AG04449 (cell line): ENCODE measurements at regions of chr20 and their contacts with region 1.

Region 1: GRCh38 chr20:49982346-49983122 is at the start of gene SNAI1:
- DNase-seq: no peak
- H3K4me3 ChIP-seq: peak within 1 kb of the TSS; percentile 86
- CTCF ChIP-seq: peak; percentile 50

Region 2: GRCh38 chr20:49865559-49865958 is 117.0 kb before region 1 on chr20:
- CTCF ChIA-PET with region 1: no interaction called
- POLR2A ChIA-PET with region 1: no interaction called
- DNase-seq: no peak
- H3K4me3 ChIP-seq: no peak overlapping the region
- CTCF ChIP-seq: no peak

Region 3: DNA sequence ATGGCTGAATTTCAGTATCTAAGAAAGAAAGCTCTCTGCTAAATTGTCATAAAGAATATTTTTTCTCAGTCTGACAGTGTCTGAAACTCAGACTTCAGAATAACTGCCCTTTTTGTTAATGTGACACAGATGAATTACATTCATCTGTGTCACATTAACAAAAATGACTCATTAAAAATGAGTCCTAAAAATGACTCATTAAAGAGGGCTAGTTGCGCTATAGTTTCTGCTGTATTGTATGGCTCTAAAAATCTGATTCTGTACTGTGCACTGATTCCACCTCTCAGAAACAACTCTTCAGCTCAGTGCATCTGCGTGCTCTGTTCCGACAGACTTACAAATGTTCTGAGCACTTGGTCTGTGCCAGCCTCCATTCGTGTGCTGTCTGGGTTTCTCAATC is 31.4 kb before region 1 on chr20:
- CTCF ChIA-PET with region 1: interaction called, 44 read pairs
- POLR2A ChIA-PET with region 1: no interaction called
- DNase-seq: no peak
- H3K4me3 ChIP-seq: no peak overlapping the region
- CTCF ChIP-seq: no peak

Region 4: GRCh38 chr20:49999329-49999728 is 16.8 kb after region 1 on chr20:
- CTCF ChIA-PET with region 1: interaction called, 88 read pairs
- POLR2A ChIA-PET with region 1: interaction called, 4 read pairs
- DNase-seq: no peak
- H3K4me3 ChIP-seq: no peak overlapping the region
- CTCF ChIP-seq: no peak

Region 5: GRCh38 chr20:50034567-50035208 is 52.2 kb after region 1 on chr20:
- CTCF ChIA-PET with region 1: interaction called, 13 read pairs
- POLR2A ChIA-PET with region 1: interaction called, 10 read pairs
- DNase-seq: no peak
- H3K4me3 ChIP-seq: no peak overlapping the region
- CTCF ChIP-seq: no peak

Region 6: GRCh38 chr20:50070991-50071888 is 88.7 kb after region 1 on chr20:
- CTCF ChIA-PET with region 1: interaction called, 984 read pairs
- POLR2A ChIA-PET with region 1: interaction called, 23 read pairs
- DNase-seq: no peak
- H3K4me3 ChIP-seq: peak overlapping the region; percentile 59
- CTCF ChIP-seq: peak; percentile 98

Region 7: GRCh38 chr20:50095476-50096078 is 113.0 kb after region 1 on chr20:
- CTCF ChIA-PET with region 1: interaction called, 48 read pairs
- POLR2A ChIA-PET with region 1: no interaction called
- DNase-seq: no peak
- H3K4me3 ChIP-seq: no peak overlapping the region
- CTCF ChIP-seq: no peak

Region 8: GRCh38 chr20:50179507-50180016 is 197.0 kb after region 1 on chr20:
- CTCF ChIA-PET with region 1: interaction called, 96 read pairs
- POLR2A ChIA-PET with region 1: no interaction called
- DNase-seq: no peak
- H3K4me3 ChIP-seq: no peak overlapping the region
- CTCF ChIP-seq: no peak

Region 9: GRCh38 chr20:50224531-50225255 is 242.2 kb after region 1 on chr20:
- CTCF ChIA-PET with region 1: no interaction called
- POLR2A ChIA-PET with region 1: no interaction called
- DNase-seq: peak; percentile 78
- H3K4me3 ChIP-seq: no peak overlapping the region
- CTCF ChIP-seq: no peak